ENCODE measurements at regions of chr9 and their contacts with region 1.

Region 1: GRCh38 chr9:124940693-124941453 is at the start of gene GOLGA1:
- DNase-seq: peak; percentile 91 to 96
- ATAC-seq: peak; percentile 87 to 91
- H3K4me3 ChIP-seq: peak within 1 kb of the TSS; percentile 63 to 85 (median 80)
- H3K27ac ChIP-seq: peak within 1 kb of the TSS; percentile 91 to 95 (median 93)
- H3K4me1 ChIP-seq: peaks cover 17 to 21% of the 10 kb centered on the region in 2 donors
- H3K27me3 ChIP-seq: no peaks in the 10 kb centered on the region
- CTCF ChIP-seq: no peak
- POLR2A ChIP-seq: peak; percentile 80 to 83
- total RNA-seq, gene GOLGA1: 12.2 to 20.5 (median 18.6) TPM

Region 2: DNA sequence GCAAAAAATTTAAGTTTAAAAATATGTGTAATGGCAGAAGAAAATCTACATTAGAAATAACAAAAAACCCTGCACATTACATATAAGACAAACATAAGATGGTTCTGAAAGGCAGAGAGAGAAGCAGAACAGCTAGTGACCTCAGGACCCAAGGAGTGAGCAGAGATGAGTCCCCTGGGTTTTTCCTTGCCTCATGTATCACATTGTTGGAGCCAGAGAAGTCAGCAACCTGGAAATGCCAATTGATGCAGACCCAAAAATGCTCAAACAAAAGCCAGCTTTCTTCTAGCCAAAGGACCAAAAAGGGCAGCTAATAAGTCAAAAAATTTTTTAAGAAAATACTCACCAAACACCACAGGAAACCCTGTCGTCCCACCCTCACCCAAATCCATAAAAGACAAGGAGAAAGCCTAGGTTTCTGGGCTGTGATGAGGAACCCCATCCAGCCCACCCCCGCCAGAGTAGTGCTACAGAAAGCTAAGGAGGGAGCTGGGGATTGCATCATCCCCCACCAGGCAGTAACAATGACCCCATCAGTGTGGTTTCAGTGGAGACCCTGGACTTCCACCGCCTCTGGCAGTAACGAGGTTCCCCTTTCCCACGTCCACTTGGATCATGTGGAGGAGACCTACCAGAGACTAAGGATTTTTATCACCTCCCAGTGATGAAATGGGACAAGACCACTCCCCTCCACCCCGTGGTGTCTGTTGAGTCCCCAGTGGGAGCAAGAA is 1028.5 kb before region 1 on chr9:
- in situ Hi-C with region 1: no loop called
- intact Hi-C with region 1: no loop called
- DNase-seq: no peak
- ATAC-seq: no peak
- H3K4me3 ChIP-seq: no peak overlapping the region
- H3K27ac ChIP-seq: no peak overlapping the region
- H3K4me1 ChIP-seq: peaks cover 0 to 6% of the 10 kb centered on the region in 2 donors
- H3K27me3 ChIP-seq: no peaks in the 10 kb centered on the region
- CTCF ChIP-seq: no peak
- POLR2A ChIP-seq: no peak

Region 3: GRCh38 chr9:124771021-124771866 is 169.6 kb before region 1 on chr9 and contains the start of gene NR6A1:
- in situ Hi-C with region 1: no loop called
- intact Hi-C with region 1: loop called (anchors 2 kb)
- DNase-seq: peak; percentile 94 to 96
- ATAC-seq: peak; percentile 87 to 93
- H3K4me3 ChIP-seq: peak within 1 kb of the TSS; percentile 61 to 77 (median 72)
- H3K27ac ChIP-seq: peak within 1 kb of the TSS; percentile 77 to 87 (median 80)
- H3K4me1 ChIP-seq: peaks cover 17 to 20% of the 10 kb centered on the region in 2 donors
- H3K27me3 ChIP-seq: peaks cover 8 to 32% (median 14%) of the 10 kb centered on the region in 3 donors
- CTCF ChIP-seq: peak in 4 of 5 experiments; percentile 37 to 61 (median 47)
- POLR2A ChIP-seq: peak; percentile 69 to 84
- total RNA-seq, gene NR6A1: 0.58 to 5.6 (median 2.1) TPM

Region 4: DNA sequence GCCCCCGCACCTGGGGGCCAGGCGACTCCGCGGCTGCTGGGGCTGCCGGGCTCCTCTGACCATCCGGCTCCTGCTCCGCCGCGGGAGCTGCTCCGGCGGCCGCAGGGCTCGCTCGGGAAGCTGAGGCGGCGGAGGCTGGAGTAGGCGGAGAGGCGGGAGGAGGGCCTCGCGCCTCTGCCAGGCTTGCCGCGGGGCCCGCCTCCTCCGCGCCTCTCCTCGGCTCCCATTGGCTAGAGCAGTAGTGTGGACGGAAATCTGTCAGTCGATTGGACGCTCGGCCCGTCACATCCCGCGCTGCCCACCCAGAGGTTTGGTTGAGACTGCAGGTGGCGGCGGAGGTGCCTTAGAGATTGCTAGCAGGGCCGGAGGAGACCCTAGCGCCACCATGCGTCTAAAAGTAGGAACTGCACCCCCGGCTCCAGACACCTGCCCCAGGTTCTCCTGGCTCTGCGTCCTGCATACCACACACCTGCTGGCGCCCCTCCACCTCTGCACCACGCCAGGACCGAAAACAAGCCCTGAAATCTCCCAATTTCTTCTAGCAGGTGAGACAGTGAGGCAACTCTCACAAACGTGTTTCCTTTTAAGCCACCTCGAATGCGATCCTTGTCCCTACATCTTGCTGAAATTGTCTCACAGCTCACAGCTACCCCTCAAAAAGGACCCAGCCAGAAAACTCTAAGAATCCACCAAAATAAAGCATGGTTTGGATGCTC is 202.7 kb after region 1 on chr9 and contains the start of gene SCAI:
- in situ Hi-C with region 1: loop called (anchors 5 to 25 kb)
- intact Hi-C with region 1: loop called (anchors 1 kb)
- DNase-seq: peak; percentile 99
- ATAC-seq: peak; percentile 99 to 100
- H3K4me3 ChIP-seq: peak within 1 kb of the TSS; percentile 64 to 78 (median 76)
- H3K27ac ChIP-seq: peak within 1 kb of the TSS; percentile 61 to 81 (median 80)
- H3K4me1 ChIP-seq: peaks cover 10 to 15% of the 10 kb centered on the region in 2 donors
- H3K27me3 ChIP-seq: no peaks in the 10 kb centered on the region
- CTCF ChIP-seq: peak; percentile 98 to 100 (median 99)
- POLR2A ChIP-seq: no peak
- total RNA-seq, gene SCAI: 1.1 to 4.7 (median 3.4) TPM

Region 5: DNA sequence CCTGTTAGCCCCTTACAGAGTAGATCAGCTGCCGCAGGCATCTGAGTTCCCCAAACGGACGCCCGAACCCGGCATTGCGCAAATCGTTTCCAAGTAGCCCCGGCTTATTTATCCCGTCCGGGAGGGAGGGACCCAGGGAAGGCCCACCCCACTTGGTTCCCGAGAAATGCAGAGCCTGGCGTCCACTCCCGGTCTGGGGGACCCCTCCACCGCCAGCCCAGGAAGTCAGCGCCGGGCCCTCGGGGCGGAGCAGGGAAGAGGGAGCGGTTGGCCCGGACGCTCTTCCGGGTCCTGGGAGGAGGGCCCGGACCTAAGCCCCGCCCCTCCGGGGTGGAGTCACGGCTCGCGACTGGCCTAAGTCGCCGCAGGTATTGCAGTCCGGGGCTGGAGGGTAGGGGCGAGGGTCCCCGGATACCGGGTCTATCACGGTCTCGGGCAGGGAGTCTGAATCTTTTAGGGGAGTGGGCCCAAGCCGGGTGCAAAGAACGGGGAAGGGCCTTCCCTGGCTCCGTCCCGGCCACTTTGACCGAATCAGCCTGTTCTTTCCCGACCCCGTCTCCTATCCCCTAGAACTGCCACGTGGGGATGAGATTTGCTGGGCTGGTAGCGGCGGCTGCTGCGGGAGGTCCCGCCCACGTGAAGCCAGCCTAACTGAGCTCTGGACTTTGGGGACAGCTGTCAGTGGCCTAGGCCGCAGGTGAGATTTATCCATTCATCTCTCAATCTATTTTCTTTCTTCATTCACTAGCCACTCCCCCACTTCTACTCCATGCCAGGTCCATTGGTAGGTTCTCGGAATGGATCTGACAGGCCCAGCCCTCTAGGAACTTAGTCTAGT is 259.6 kb after region 1 on chr9 and contains the start of gene RABEPK:
- in situ Hi-C with region 1: no loop called
- intact Hi-C with region 1: loop called (anchors 5 kb)
- DNase-seq: peak; percentile 81 to 89
- ATAC-seq: peak; percentile 94 to 97
- H3K4me3 ChIP-seq: peak within 1 kb of the TSS; percentile 83 to 97 (median 94)
- H3K27ac ChIP-seq: peak within 1 kb of the TSS; percentile 87 to 99 (median 97)
- H3K4me1 ChIP-seq: peaks cover 3 to 8% of the 10 kb centered on the region in 2 donors
- H3K27me3 ChIP-seq: no peaks in the 10 kb centered on the region
- CTCF ChIP-seq: no peak
- POLR2A ChIP-seq: peak; percentile 86 to 87
- total RNA-seq, gene RABEPK: 8.7 to 15.0 (median 13.4) TPM

Region 6: DNA sequence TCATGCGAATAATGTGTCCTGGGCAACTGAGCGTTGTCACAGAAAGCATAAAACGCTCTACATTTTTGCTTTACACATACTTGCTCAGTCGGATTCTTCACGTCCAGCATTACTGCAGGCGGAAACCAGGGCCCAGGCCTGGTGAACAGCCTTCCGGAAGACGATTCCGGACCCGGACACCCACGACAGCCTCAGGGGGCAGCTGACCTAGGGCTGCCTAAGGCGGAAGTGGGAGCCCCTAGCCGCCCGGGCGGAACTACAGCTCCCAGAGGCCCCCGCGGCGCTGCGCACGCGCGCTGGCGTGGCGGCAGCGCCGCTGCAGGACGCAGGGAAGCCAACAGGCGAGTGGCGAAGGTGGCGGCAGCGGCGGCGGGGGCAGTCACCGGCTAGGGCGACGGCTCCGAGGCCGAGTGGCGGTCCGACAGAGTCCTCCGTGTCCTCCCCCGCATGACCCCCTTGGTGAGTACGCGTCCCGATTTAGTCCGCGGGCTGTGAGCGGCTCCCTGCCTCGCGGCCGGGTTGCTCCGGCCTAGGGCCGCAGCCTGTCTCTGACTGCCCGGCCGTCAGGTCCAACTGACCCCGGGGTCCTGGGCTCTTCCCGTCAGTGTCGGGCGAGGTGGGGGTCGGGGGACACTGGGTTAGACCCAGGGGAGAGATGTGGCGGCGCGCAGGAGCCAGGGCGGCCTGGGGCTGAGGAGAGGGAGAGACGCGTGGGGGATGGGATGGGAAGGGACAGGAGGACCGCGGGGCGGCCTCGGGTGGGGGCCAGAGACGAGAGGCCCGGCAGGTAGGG is 320.8 kb after region 1 on chr9 and contains the start of gene GAPVD1:
- in situ Hi-C with region 1: no loop called
- intact Hi-C with region 1: loop called (anchors 5 kb)
- DNase-seq: peak; percentile 68 to 89
- ATAC-seq: peak; percentile 96 to 97
- H3K4me3 ChIP-seq: peak within 1 kb of the TSS; percentile 91 to 99 (median 98)
- H3K27ac ChIP-seq: peak within 1 kb of the TSS; percentile 84 to 97 (median 94)
- H3K4me1 ChIP-seq: peaks cover 27% of the 10 kb centered on the region in 2 donors
- H3K27me3 ChIP-seq: no peaks in the 10 kb centered on the region
- CTCF ChIP-seq: peak; percentile 40 to 60 (median 48)
- POLR2A ChIP-seq: peak; percentile 78 to 89
- total RNA-seq, gene GAPVD1: 46.9 to 66.8 (median 53.6) TPM

Measured in gastrocnemius medialis (tissue), 4 donors.